ENCODE measurements at regions of chr4 and their contacts with region 1.

Region 1: GRCh38 chr4:70704331-70705145 is 16.2 kb downstream of the UTP3 start:
- DNase-seq: peak; percentile 86 to 88
- ATAC-seq: peak; percentile 83

Region 2: DNA sequence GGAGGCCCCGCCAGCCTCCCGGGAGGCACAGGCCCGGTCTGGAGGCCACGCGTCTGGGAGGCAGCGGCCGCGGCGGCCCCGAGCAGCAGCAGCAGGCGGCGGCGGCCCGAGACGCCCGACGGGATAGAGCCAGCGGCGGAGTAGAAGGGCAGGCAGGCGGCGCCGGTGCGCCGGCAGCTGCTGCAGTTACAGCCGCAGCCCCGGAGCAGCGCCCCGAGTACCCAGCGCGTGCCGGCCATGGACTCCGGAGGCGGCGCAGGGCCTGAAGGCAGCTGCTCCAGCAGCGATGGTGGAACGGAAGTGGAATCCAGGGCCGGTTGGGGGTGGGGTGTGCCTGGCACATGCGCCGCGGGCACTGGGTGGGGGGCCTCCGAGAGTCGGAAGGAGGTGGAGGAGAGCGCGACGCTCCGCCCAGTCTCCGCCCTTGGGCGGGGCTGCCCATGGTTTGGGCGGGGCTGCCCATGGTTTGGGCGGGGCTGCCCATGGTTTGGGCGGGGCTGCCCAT is 135.1 kb after region 1 on chr4 and contains the start of gene GRSF1:
- intact Hi-C with region 1: loop called in 1 of 2 experiments (anchors 10 kb)
- DNase-seq: peak; percentile 97 to 98
- ATAC-seq: peak; percentile 90
- total RNA-seq, gene GRSF1: 79.3 to 86.0 TPM